ENCODE measurements at regions of chr18 and their contacts with region 1.

Region 1: GRCh38 chr18:12376718-12377555 is at the start of gene AFG3L2:
- DNase-seq: peak; percentile 100
- ATAC-seq: peak; percentile 89
- H3K4me3 Mint-ChIP-seq: peak within 1 kb of the TSS; percentile 93
- H3K27ac Mint-ChIP-seq: peak within 1 kb of the TSS; percentile 96
- H3K4me1 Mint-ChIP-seq: peaks cover 43% of the 10 kb centered on the region
- H3K27me3 Mint-ChIP-seq: no peaks in the 10 kb centered on the region
- total RNA-seq, gene AFG3L2: 40.6 to 44.3 TPM

Region 2: GRCh38 chr18:12702221-12703095 is 325.5 kb after region 1 on chr18 and contains the starts of genes CEP76 and PSMG2:
- CTCF ChIA-PET with region 1: no interaction called
- POLR2A ChIA-PET with region 1: interaction called, 12 read pairs
- DNase-seq: peak; percentile 84
- ATAC-seq: peak; percentile 83
- H3K4me3 Mint-ChIP-seq: peak within 1 kb of the TSS; percentile 94
- H3K27ac Mint-ChIP-seq: peak within 1 kb of the TSS; percentile 100
- H3K4me1 Mint-ChIP-seq: peaks cover 47% of the 10 kb centered on the region
- H3K27me3 Mint-ChIP-seq: no peaks in the 10 kb centered on the region
- total RNA-seq, gene CEP76: 12.9 to 17.2 TPM
- total RNA-seq, gene PSMG2: 104 to 108 TPM